Lower leg skin (tissue), 4 donors: ENCODE measurements at regions of chr19 and their contacts with region 1.

Region 1: GRCh38 chr19:11125994-11126685 is 29.4 kb downstream of the SPC24 start:
- DNase-seq: peak; percentile 73 to 96
- H3K4me3 ChIP-seq: no peak overlapping the region
- CTCF ChIP-seq: peak in 1 of 3 donors; percentile 46
- POLR2A ChIP-seq: no peak

Region 2: GRCh38 chr19:11035441-11036377 is 90.4 kb before region 1 on chr19:
- intact Hi-C with region 1: loop called (anchors 5 kb)
- DNase-seq: peak; percentile 92 to 98
- H3K4me3 ChIP-seq: no peak overlapping the region
- CTCF ChIP-seq: peak in 2 of 3 donors; percentile 5 to 77
- POLR2A ChIP-seq: no peak

Region 3: GRCh38 chr19:11203194-11204075 is 77.3 kb after region 1 on chr19:
- intact Hi-C with region 1: loop called (anchors 10 kb)
- DNase-seq: peak; percentile 71 to 95
- H3K4me3 ChIP-seq: no peak overlapping the region
- CTCF ChIP-seq: peak in 1 of 3 donors; percentile 30
- POLR2A ChIP-seq: no peak